IMR-90 (cell line): ENCODE measurements at regions of chr6 and their contacts with region 1.

Region 1: DNA sequence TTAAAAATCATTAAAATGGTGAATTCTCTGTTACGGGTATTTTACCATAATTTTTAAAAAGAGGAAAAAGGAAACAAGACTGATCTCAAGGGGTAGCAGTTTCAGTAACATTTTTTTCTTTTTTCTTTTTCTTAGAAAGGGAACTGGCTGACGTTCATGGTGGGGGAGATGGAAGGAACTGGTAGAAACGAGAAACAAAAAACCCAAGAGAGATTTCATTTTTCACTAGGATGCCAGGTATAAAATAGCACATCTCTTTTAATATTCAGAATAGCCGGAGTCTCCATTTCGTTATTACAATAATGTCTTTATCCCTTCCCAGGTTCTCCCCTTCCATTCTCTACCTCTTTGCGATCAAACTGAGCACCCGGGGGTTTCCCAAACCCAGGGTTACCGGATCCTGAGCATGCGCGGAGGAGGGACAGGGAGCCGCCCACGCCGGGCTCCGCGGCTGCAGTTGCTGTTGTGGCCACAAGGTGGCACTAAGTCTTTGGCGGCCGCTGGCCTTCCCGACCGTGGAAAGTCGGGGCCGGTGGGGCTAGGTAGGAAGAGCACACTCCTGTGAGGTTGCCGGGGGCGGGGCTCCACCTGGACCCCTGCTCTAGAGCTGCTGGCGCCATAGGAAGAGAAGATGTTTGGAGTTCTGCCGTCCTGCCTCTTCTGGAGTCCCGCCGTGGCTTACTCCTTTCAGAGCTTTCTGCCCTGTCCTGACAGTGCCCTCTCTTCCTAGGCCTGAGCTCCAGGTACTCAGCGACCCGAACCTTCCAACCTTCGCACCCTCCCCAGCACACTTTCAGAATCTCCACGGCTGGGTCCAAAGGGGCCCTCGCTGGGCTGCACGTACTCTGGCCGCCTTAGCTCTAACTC is 146.8 kb downstream of the SH3BGRL2 start:
- DNase-seq: peak; percentile 47
- ATAC-seq: peak; percentile 99
- H3K4me3 ChIP-seq: peak overlapping the region; percentile 33
- H3K27ac ChIP-seq: no peak overlapping the region
- H3K4me1 ChIP-seq: no peaks in the 10 kb centered on the region
- H3K27me3 ChIP-seq: peaks cover 5% of the 10 kb centered on the region
- CTCF ChIP-seq: peak; percentile 97
- POLR2A ChIP-seq: no peak
- RAD21 ChIP-seq: peak; percentile 62

Region 2: GRCh38 chr6:79665725-79666551 is 112.0 kb before region 1 on chr6:
- CTCF ChIA-PET with region 1: no interaction called
- POLR2A ChIA-PET with region 1: no interaction called
- dilution Hi-C with region 1: no loop called
- in situ Hi-C with region 1: no loop called
- intact Hi-C with region 1: no loop called
- DNase-seq: no peak
- ATAC-seq: no peak
- H3K4me3 ChIP-seq: no peak overlapping the region
- H3K27ac ChIP-seq: no peak overlapping the region
- H3K4me1 ChIP-seq: no peaks in the 10 kb centered on the region
- H3K27me3 ChIP-seq: no peaks in the 10 kb centered on the region
- CTCF ChIP-seq: no peak
- POLR2A ChIP-seq: no peak
- RAD21 ChIP-seq: no peak

Region 3: GRCh38 chr6:79813854-79814709 is 36.1 kb after region 1 on chr6:
- CTCF ChIA-PET with region 1: interaction called, 5 read pairs
- POLR2A ChIA-PET with region 1: no interaction called
- dilution Hi-C with region 1: no loop called
- in situ Hi-C with region 1: no loop called
- intact Hi-C with region 1: loop called (anchors 2 kb)
- DNase-seq: peak; percentile 61
- ATAC-seq: peak; percentile 91
- H3K4me3 ChIP-seq: no peak overlapping the region
- H3K27ac ChIP-seq: no peak overlapping the region
- H3K4me1 ChIP-seq: no peaks in the 10 kb centered on the region
- H3K27me3 ChIP-seq: no peaks in the 10 kb centered on the region
- CTCF ChIP-seq: peak; percentile 78
- POLR2A ChIP-seq: no peak
- RAD21 ChIP-seq: peak; percentile 60

Region 4: DNA sequence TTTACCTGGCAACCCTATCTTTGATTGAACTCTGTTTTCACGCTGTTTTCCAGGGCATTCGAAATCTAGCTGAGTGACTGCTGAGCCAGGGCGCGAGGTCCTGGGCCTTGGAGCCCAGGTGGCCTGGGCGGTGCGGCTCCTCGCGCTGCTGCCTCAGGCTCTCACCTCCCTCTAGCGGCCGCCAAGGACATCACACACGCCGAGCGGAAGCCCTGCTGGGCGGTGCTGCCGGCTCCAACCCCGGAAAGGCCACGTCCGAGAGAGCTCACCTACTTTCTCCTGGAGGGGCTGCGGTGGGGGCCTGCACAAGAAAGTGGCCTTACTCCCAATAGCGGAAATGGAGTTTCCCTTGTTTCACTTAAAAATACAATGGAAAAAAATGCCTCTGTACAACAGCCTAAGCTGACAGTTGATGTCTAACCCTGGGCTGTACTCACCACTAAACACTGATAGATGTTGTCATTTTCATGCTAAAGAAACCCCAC is 91.7 kb after region 1 on chr6:
- CTCF ChIA-PET with region 1: interaction called, 3 read pairs
- POLR2A ChIA-PET with region 1: no interaction called
- dilution Hi-C with region 1: no loop called
- in situ Hi-C with region 1: no loop called
- intact Hi-C with region 1: loop called (anchors 1 kb)
- DNase-seq: peak; percentile 57
- ATAC-seq: peak; percentile 100
- H3K4me3 ChIP-seq: no peak overlapping the region
- H3K27ac ChIP-seq: no peak overlapping the region
- H3K4me1 ChIP-seq: no peaks in the 10 kb centered on the region
- H3K27me3 ChIP-seq: peaks cover under 1% of the 10 kb centered on the region
- CTCF ChIP-seq: peak; percentile 79
- POLR2A ChIP-seq: no peak
- RAD21 ChIP-seq: peak; percentile 37